ENCODE measurements at regions of chr2 and their contacts with region 1.

Region 1: GRCh38 chr2:158456309-158457066 is at the starts of genes CCDC148 and PKP4:
- DNase-seq: peak; percentile 92
- ATAC-seq: peak; percentile 93
- H3K4me3 ChIP-seq: peak within 1 kb of the TSS; percentile 57 to 83 (median 69)
- H3K4me3 Mint-ChIP-seq: peak within 1 kb of the TSS; percentile 90
- H3K27ac ChIP-seq: peak within 1 kb of the TSS in 1 of 2 donors; percentile 7
- H3K27ac Mint-ChIP-seq: peak within 1 kb of the TSS; percentile 69
- H3K4me1 ChIP-seq: peaks cover 12 to 16% of the 10 kb centered on the region in 2 donors
- H3K4me1 Mint-ChIP-seq: peaks cover 17% of the 10 kb centered on the region
- H3K27me3 ChIP-seq: peaks cover 0 to 29% (median 9%) of the 10 kb centered on the region in 4 experiments
- H3K27me3 Mint-ChIP-seq: peaks cover 24% of the 10 kb centered on the region
- CTCF ChIP-seq: no peak
- total RNA-seq, gene CCDC148: 0.56 TPM in 1 of 2 replicates, not detected in the other
- total RNA-seq, gene PKP4: 13.3 and 13.5 TPM in 2 replicates

Region 2: DNA sequence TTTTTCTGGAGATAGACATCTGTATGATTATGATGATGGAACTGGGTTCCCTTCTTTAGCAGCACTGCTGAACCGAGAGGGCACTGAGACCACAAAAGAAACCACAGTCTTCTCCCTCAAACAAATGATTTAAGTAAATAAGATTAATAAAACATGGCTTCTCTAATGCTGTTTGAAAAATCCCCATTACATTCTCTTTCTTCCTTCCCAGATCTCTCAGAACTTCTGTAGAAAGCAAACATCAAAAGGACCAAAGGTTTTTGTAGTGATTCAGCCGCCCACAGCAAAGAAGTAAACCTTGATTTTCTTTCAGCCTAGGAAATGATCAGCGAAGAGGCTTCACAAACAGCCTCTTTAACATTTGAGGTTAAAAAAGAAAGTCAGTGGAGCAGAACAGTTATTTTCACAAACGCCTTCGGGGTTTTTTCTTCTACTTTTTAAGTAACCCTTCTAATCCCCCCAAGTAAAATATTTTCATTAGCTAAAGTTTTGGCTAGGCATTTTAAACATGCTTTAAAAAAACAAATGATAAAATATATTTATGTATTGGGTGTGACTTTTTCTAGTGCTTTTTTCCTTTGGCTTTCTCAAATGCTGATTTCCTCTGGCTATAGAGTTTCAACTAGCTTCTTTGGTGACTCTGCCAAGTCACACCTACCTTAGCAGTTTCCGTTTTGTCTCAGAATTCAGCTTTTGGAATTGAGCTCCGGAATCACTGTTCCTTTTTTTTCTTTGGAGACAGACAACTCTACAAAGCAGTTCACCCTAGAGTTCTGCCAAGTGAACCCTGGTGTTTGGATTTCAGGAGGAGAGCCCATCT is 265.2 kb before region 1 on chr2:
- CTCF ChIA-PET with region 1: no interaction called
- POLR2A ChIA-PET with region 1: no interaction called
- intact Hi-C with region 1: loop called (anchors 5 kb)
- DNase-seq: peak; percentile 65
- ATAC-seq: peak; percentile 74
- H3K4me3 ChIP-seq: peak overlapping the region; percentile 6 to 57 (median 38)
- H3K4me3 Mint-ChIP-seq: peak overlapping the region; percentile 80
- H3K27ac ChIP-seq: peak overlapping the region; percentile 50 to 93
- H3K27ac Mint-ChIP-seq: peak overlapping the region; percentile 93
- H3K4me1 ChIP-seq: peaks cover 23 to 34% of the 10 kb centered on the region in 2 donors
- H3K4me1 Mint-ChIP-seq: peaks cover 31% of the 10 kb centered on the region
- H3K27me3 ChIP-seq: no peaks in the 10 kb centered on the region
- H3K27me3 Mint-ChIP-seq: no peaks in the 10 kb centered on the region
- CTCF ChIP-seq: no peak

Region 3: DNA sequence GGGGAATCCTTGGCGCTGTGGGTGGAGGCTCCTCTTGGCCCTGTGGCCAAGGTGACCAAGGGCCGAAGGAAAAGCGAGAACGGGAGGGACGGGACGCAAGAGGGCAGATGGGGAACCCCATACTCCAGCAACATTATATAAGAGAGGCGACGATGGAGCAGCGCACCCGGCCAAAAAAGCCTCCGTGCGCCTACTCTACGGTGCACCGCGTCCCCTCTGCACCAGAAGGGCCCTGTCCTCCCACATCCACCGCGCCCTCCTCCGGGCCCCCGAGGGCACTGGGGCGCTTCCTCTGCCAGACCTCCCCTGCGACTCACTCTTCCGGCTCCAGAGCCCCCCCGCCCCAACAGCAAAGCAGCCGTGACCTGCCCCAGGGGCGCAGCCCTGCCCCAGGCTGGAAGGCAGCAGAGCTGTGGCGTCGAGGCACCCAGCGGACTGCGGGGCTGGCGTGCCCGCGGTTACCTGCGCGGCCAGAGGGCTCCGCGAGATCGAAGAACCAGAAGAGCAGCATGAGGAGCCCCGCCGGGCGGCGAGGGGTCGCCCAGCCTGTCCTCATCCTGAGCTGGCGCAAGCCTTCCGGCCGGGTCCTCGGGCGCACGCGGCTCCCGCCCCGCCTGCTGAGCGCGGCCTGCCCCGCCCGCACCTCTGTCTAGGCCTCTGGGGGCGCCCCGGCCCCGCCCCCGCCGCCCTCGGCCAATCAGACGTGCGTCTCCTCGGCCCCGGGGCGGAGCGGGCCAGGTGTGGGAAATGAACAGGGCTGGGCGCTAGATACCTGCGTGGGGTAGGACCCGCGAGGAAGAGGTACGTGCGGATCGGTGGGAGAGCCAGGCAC is 1447.9 kb after region 1 on chr2:
- CTCF ChIA-PET with region 1: no interaction called
- POLR2A ChIA-PET with region 1: no interaction called
- intact Hi-C with region 1: loop called (anchors 5 kb)
- DNase-seq: peak; percentile 90
- ATAC-seq: peak; percentile 85
- H3K4me3 ChIP-seq: peak within 1 kb of the TSS; percentile 69 to 96 (median 79)
- H3K4me3 Mint-ChIP-seq: peak within 1 kb of the TSS; percentile 100
- H3K27ac ChIP-seq: peak within 1 kb of the TSS; percentile 85 to 87
- H3K27ac Mint-ChIP-seq: peak within 1 kb of the TSS; percentile 99
- H3K4me1 ChIP-seq: peaks cover 7 to 26% of the 10 kb centered on the region in 2 donors
- H3K4me1 Mint-ChIP-seq: peaks cover 41% of the 10 kb centered on the region
- H3K27me3 ChIP-seq: no peaks in the 10 kb centered on the region
- H3K27me3 Mint-ChIP-seq: no peaks in the 10 kb centered on the region
- CTCF ChIP-seq: no peak